CD4-positive, alpha-beta memory T cell (primary cell): ENCODE measurements at regions of chr6 and their contacts with region 1.

Region 1: DNA sequence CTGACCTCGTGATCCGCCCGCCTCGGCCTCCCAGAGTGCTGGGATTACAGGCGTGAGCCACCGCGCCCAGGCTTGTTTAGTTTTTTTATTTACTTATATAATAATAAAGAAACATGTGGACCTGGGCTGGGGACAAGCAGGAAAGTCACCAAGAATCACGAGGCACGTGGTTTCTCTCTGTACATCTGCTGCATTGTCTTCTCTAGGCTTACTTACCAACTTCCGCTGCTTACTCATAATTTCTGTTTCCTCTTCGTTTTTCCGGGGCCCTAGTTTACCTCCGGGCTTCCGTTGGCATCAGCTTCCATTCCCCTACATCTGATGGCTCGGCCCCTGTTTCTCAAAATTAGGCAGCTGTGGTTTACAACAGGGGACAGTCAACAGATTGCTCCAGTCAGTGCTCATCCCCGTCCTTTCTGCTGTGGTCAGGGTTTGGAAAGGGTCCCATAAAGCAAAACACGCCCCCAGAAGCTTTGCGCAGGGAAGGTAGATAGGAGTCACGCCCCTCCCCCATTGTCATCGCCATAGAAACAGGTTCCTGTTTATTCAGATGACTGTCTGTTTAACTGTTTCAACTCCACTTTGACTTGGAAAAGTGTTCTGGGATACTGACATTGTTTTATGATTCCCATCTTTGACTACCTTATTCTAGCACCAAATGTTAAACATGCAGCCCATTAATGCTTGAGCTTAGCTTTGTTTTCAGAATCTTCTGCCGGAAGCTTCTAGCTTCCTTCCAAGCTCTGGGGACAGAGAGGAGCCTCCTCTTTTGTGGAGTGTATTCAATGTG is 31.9 kb upstream of the TXLNB start:
- DNase-seq: peak; percentile 86 to 91 (median 89)
- H3K4me3 ChIP-seq: peak overlapping the region; percentile 33 to 61
- H3K4me3 Mint-ChIP-seq: peak overlapping the region; percentile 78 to 92 (median 88)
- H3K27ac ChIP-seq: peak overlapping the region; percentile 87
- H3K27ac Mint-ChIP-seq: peak overlapping the region; percentile 98 to 100 (median 98)
- H3K4me1 ChIP-seq: peaks cover 35% of the 10 kb centered on the region
- H3K4me1 Mint-ChIP-seq: peaks cover 21 to 43% (median 34%) of the 10 kb centered on the region in 4 donors
- H3K27me3 ChIP-seq: no peaks in the 10 kb centered on the region
- H3K27me3 Mint-ChIP-seq: no peaks in the 10 kb centered on the region

Region 2: GRCh38 chr6:138923561-138923960 is 400.1 kb before region 1 on chr6:
- CTCF ChIA-PET with region 1: no interaction called
- POLR2A ChIA-PET with region 1: no interaction called
- intact Hi-C with region 1: no loop called
- DNase-seq: no peak
- H3K4me3 ChIP-seq: no peak overlapping the region
- H3K4me3 Mint-ChIP-seq: no peak overlapping the region
- H3K27ac ChIP-seq: no peak overlapping the region
- H3K27ac Mint-ChIP-seq: peak overlapping the region in 1 of 7 donors; percentile 57
- H3K4me1 ChIP-seq: no peaks in the 10 kb centered on the region
- H3K4me1 Mint-ChIP-seq: peaks cover 0 to 3% (median 1%) of the 10 kb centered on the region in 4 donors
- H3K27me3 ChIP-seq: no peaks in the 10 kb centered on the region
- H3K27me3 Mint-ChIP-seq: no peaks in the 10 kb centered on the region

Region 3: DNA sequence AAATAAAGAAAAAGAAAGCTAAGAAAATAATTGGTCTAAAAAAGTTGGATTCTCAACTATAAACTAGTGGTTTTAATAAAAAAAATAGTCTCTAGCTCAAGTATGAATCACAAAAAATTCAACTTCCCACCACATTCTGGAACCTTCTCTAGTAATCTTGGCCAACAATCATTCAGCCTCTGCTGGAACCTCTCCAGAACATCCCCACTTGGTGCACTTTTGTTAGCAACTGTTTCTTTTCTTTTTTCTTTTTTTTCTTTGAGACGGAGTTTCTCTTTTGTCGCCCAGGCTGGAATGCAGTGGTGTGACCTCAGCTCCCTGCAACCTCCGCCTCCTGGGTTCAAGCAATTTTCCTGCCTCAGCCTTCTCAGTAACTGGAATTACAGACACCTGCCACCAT is 67.6 kb before region 1 on chr6:
- CTCF ChIA-PET with region 1: interaction called, 8 read pairs
- POLR2A ChIA-PET with region 1: interaction called, 16 read pairs
- intact Hi-C with region 1: loop called (anchors 5 kb)
- DNase-seq: no peak
- H3K4me3 ChIP-seq: no peak overlapping the region
- H3K4me3 Mint-ChIP-seq: peak overlapping the region in 1 of 8 donors; percentile 17
- H3K27ac ChIP-seq: no peak overlapping the region
- H3K27ac Mint-ChIP-seq: peak overlapping the region in 6 of 7 donors; percentile 62 to 94 (median 82)
- H3K4me1 ChIP-seq: peaks cover 55% of the 10 kb centered on the region
- H3K4me1 Mint-ChIP-seq: peaks cover 46 to 61% (median 50%) of the 10 kb centered on the region in 4 donors
- H3K27me3 ChIP-seq: no peaks in the 10 kb centered on the region
- H3K27me3 Mint-ChIP-seq: no peaks in the 10 kb centered on the region